ENCODE measurements at regions of chr11 and their contacts with region 1.

Region 1: DNA sequence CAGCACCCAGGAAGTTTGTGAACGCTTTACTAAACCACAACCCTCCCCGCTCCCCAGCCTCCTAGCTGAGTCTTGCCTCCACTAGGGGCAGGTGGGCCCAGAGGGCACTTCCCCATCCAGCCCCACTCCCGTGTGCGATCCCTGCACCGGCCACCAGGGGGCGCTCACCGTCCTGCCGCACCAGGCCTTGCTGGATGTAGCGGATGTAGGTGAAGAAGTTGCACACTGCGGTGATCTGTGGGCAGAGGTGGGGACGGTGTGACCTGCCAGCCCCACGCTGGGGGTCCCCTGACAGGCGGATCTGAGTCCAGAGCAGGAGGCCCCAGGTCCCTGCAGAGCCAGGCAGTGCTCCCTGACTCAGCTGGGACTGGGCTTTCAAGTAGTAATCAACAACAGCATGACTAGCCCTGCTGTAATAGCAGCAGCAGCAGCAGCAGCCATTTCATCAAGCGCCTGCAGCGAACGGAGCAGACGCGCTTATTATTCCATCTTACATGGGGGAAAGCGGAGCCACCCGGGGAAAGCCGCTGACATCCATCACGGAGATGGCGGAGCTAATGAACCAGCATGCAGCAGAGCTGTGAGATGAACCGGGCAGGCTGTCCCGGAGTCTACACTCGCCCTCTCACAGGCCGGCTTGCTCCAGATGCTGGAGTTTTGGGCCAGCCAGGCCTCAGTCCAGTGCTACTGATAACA is 7.9 kb upstream of the FADS3 start:
- DNase-seq: peak; percentile 92
- H3K4me3 ChIP-seq: no peak overlapping the region
- H3K27ac ChIP-seq: no peak overlapping the region
- H3K4me1 ChIP-seq: peaks cover 14% of the 10 kb centered on the region
- CTCF ChIP-seq: peak; percentile 98

Region 2: DNA sequence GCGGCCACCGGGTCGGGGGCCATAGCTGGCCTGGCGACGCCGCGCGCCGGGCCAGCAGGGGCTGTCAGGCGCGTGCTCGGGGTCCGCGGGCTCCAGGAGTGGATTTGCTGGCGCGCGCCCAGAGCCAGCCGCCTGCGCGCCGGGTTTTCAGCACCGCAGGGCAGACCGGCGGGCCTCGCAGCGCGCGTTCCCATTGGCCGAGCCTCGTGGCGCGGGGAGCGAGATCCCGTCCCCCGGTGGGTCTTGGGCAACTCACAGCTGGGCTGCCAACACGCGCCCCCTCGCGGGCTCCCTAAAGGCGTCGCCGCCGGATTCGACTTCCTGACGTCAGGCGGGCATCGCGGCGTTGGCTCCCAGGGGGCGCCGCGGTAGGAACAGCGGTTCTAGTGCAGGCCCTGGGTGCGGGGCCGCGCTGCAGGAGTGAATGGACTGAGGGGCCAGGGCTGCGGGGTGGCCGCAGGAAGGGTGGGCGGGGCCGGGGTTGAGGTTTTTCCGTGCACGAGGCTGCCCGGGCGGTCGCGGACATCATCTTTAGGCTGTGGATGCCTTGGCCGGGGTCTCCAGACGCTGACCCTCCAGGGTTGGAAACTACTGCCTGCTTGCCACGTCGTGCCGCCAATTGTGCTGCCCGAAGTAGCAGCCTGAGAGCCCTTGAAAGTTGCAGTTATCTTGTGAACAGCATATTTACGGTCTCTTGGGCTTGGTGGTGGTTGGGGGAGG is 82.4 kb before region 1 on chr11 and contains the start of gene FADS1:
- CTCF ChIA-PET with region 1: no interaction called
- POLR2A ChIA-PET with region 1: no interaction called
- intact Hi-C with region 1: no loop called
- DNase-seq: no peak
- H3K4me3 ChIP-seq: no peak within 1 kb of the TSS
- H3K27ac ChIP-seq: no peak within 1 kb of the TSS
- H3K4me1 ChIP-seq: no peaks in the 10 kb centered on the region
- CTCF ChIP-seq: no peak; the same call in 1 of the 2 replicates
- total RNA-seq, gene FADS1: not detected in 2 replicates

Region 3: GRCh38 chr11:61871158-61871597 is 28.1 kb before region 1 on chr11:
- CTCF ChIA-PET with region 1: interaction called, 9 read pairs
- POLR2A ChIA-PET with region 1: no interaction called
- intact Hi-C with region 1: loop called (anchors 1 kb)
- DNase-seq: peak; percentile 81
- H3K4me3 ChIP-seq: no peak overlapping the region
- H3K27ac ChIP-seq: no peak overlapping the region
- H3K4me1 ChIP-seq: peaks cover 9% of the 10 kb centered on the region
- CTCF ChIP-seq: peak; percentile 95

Region 4: DNA sequence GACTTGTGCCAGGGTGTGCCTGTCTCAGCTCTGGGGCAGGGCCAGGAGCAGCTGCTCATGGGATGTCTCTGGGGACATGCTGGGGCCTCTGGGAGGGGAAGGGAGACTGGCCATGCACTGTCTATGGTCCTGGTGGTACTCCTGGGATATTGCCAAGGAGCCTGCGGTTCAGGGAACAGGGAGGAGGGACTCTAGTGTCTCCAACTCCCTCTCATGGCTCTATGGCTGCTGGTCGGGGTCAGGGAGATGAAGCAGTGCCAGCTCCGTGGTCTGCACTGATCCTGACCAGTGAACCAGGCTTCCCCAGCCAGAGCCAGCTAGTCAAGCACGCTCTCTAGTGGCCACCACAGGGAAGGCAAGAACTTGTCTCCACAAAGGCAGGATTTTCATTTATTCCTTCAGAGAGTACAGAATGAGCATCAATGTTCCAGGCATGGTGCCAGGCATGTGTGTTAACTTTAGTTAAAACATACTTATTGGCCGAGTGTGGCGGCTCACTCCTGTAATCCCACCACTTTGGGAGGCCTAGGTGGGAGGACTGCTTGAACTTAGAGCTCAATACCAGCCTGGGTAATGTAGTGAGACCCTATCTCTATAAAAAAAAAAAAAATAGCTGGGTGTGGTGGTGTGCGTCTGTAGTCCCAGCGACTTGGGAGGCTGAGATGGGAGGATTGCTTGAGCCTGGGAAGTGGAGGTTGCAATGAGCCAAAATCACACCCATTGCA is 48.4 kb after region 1 on chr11:
- CTCF ChIA-PET with region 1: interaction called, 26 read pairs
- POLR2A ChIA-PET with region 1: interaction called, 5 read pairs
- intact Hi-C with region 1: loop called (anchors 1 kb)
- DNase-seq: peak; percentile 78
- H3K4me3 ChIP-seq: no peak overlapping the region
- H3K27ac ChIP-seq: no peak overlapping the region
- H3K4me1 ChIP-seq: peaks cover 8% of the 10 kb centered on the region
- CTCF ChIP-seq: peak; percentile 94

Region 5: GRCh38 chr11:62081378-62082291 is 182.3 kb after region 1 on chr11:
- CTCF ChIA-PET with region 1: interaction called, 28 read pairs
- POLR2A ChIA-PET with region 1: interaction called, 3 read pairs
- intact Hi-C with region 1: loop called (anchors 1 kb)
- DNase-seq: peak; percentile 58
- H3K4me3 ChIP-seq: no peak overlapping the region
- H3K27ac ChIP-seq: no peak overlapping the region
- H3K4me1 ChIP-seq: no peaks in the 10 kb centered on the region
- CTCF ChIP-seq: peak; percentile 99

Measured in OCI-LY7 (cell line).